Activated CD4-positive, alpha-beta T cell treated with anti-CD3 and anti-CD28 coated beads for 36 hours (primary cell): ENCODE measurements at regions of chr21 and their contacts with region 1.

Region 1: GRCh38 chr21:14251336-14251735 is 35.4 kb downstream of the RBM11 start:
- DNase-seq: no peak
- ATAC-seq: no peak
- H3K4me3 Mint-ChIP-seq: no peak overlapping the region
- H3K27ac Mint-ChIP-seq: no peak overlapping the region
- H3K4me1 Mint-ChIP-seq: peaks cover 2% of the 10 kb centered on the region
- H3K27me3 Mint-ChIP-seq: peaks cover 14% of the 10 kb centered on the region

Region 2: GRCh38 chr21:15592271-15592860 is 1341.0 kb after region 1 on chr21:
- CTCF ChIA-PET with region 1: no interaction called
- POLR2A ChIA-PET with region 1: no interaction called
- intact Hi-C with region 1: loop called in 1 of 2 experiments (anchors 5 kb)
- DNase-seq: no peak
- ATAC-seq: no peak
- H3K4me3 Mint-ChIP-seq: no peak overlapping the region
- H3K27ac Mint-ChIP-seq: no peak overlapping the region
- H3K4me1 Mint-ChIP-seq: no peaks in the 10 kb centered on the region
- H3K27me3 Mint-ChIP-seq: peaks cover 8% of the 10 kb centered on the region